PC-3 (cell line): ENCODE measurements at regions of chr1 and their contacts with region 1.

Region 1: GRCh38 chr1:66929999-66930822 is 5.4 kb downstream of the MIER1 start:
- DNase-seq: peak; percentile 95
- ATAC-seq: peak; percentile 60
- H3K4me3 ChIP-seq: peak overlapping the region; percentile 88
- H3K27ac ChIP-seq: peak overlapping the region; percentile 82
- H3K4me1 ChIP-seq: peaks cover 44% of the 10 kb centered on the region
- H3K27me3 ChIP-seq: no peaks in the 10 kb centered on the region
- CTCF ChIP-seq: peak; percentile 22; the same call in 1 of the 2 replicates

Region 2: GRCh38 chr1:65419681-65420589 is 1510.3 kb before region 1 on chr1:
- CTCF ChIA-PET with region 1: no interaction called
- POLR2A ChIA-PET with region 1: no interaction called
- intact Hi-C with region 1: loop called (anchors 5 kb)
- DNase-seq: peak; percentile 98
- ATAC-seq: peak; percentile 86
- H3K4me3 ChIP-seq: peak overlapping the region; percentile 86
- H3K27ac ChIP-seq: peak overlapping the region; percentile 2
- H3K4me1 ChIP-seq: peaks cover 54% of the 10 kb centered on the region
- H3K27me3 ChIP-seq: no peaks in the 10 kb centered on the region
- CTCF ChIP-seq: no peak

Region 3: DNA sequence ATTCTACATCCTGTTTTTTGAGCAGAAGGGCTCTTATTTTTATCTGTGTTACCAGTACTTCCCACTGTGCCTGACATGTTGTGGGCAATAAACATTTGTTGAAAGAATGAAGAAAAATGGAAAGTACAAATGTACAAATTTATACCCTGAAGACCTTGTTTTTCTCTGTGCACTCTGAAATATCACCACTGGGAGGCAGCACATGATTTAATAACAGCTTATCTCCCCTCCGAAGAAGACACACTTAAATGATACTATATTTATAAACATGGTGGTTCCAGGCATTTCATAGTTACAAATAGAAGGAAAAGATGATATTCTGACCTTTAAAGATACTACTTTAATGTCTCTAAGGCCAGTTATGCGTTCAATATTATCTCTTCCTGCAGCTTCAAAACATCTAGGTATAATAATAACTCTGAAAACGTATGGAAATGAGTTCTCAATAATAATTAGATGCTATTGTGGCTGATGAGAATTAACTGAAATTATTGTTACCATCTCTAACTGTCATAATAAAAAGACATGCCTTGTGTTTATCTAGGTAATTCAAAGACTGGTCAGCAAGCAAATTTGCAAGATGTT is 165.1 kb before region 1 on chr1:
- CTCF ChIA-PET with region 1: no interaction called
- POLR2A ChIA-PET with region 1: no interaction called
- intact Hi-C with region 1: loop called (anchors 5 kb)
- DNase-seq: peak; percentile 65
- ATAC-seq: peak; percentile 66
- H3K4me3 ChIP-seq: no peak overlapping the region
- H3K27ac ChIP-seq: no peak overlapping the region
- H3K4me1 ChIP-seq: no peaks in the 10 kb centered on the region
- H3K27me3 ChIP-seq: no peaks in the 10 kb centered on the region
- CTCF ChIP-seq: peak; percentile 92

Region 4: GRCh38 chr1:66981679-66982078 is 51.5 kb after region 1 on chr1:
- CTCF ChIA-PET with region 1: no interaction called
- POLR2A ChIA-PET with region 1: no interaction called
- intact Hi-C with region 1: loop called (anchors 2 kb)
- DNase-seq: no peak
- ATAC-seq: no peak
- H3K4me3 ChIP-seq: no peak overlapping the region
- H3K27ac ChIP-seq: no peak overlapping the region
- H3K4me1 ChIP-seq: peaks cover 15% of the 10 kb centered on the region
- H3K27me3 ChIP-seq: no peaks in the 10 kb centered on the region
- CTCF ChIP-seq: no peak

Region 5: DNA sequence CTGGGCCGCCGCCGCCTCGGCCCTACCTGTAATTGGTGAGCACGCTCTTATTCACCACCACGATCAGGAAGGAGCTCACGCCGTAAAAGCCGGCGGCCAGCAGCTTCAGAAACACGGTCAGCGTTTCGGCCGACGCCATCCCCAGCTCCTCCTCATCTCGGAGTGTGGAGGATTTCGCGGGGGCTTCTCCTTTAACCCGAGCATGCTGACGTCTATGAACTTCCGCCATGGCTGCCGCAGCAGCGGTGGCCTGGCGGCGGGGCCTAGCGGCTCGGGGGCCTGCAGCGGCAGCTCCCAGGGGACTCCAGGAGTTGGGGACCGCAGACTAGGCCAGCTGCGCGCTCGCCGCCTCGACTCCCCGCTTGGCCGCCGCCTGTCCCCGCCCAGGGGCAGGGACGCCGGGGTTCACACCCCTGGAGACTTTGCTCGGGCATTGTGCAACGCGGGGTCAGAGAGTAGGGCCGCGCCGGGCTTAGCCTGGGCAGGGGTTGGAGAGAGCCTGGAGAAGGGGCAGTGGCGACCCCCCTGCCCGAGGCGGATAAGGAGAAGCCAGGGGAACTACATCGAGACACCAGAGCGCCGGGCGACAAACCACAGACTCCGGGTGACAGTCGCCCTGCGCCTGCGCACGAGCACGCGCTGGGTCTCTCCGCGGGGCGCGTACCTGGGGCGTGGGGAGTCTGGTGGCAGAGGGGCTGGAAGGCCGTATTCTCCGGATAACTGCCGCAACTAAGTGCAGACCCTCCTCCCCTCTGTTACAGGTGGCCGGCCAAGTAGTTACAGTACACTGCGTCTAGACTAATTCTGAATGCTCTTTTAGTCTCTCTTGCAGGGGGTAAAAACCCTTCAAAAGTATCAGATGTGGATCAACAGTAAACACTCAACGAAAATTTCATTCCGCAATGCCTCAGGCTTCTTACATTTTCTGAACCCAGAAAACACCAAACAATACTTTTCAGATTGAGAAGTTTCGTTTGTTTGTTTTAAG is 123.9 kb after region 1 on chr1 and contains the start of gene SLC35D1:
- CTCF ChIA-PET with region 1: no interaction called
- POLR2A ChIA-PET with region 1: no interaction called
- intact Hi-C with region 1: loop called (anchors 5 kb)
- DNase-seq: peak; percentile 54
- ATAC-seq: peak; percentile 64
- H3K4me3 ChIP-seq: peak within 1 kb of the TSS; percentile 92
- H3K27ac ChIP-seq: peak within 1 kb of the TSS; percentile 68
- H3K4me1 ChIP-seq: peaks cover 23% of the 10 kb centered on the region
- H3K27me3 ChIP-seq: no peaks in the 10 kb centered on the region
- CTCF ChIP-seq: no peak
- total RNA-seq, gene SLC35D1: 5.3 and 6.1 TPM in 2 replicates